Activated T-helper 2 cell treated with anti-CD3 and anti-CD28 coated beads, Interferon-gamma antibody, Interleukin-2, Interleukin-4, amounts not matched to agents 10 μg/mL and 5 μg/mL and 100 μg/mL, durations not matched to agents 14 hours and 24 hours and 36 hours (primary cell): ENCODE measurements at regions of chr12 and their contacts with region 1.

Region 1: GRCh38 chr12:24991209-24992049 is 42.5 kb upstream of the BCAT1 start:
- DNase-seq: no peak
- H3K4me3 Mint-ChIP-seq: no peak overlapping the region
- H3K27ac Mint-ChIP-seq: no peak overlapping the region
- H3K4me1 Mint-ChIP-seq: no peaks in the 10 kb centered on the region
- H3K27me3 Mint-ChIP-seq: peaks cover 19% of the 10 kb centered on the region

Region 2: DNA sequence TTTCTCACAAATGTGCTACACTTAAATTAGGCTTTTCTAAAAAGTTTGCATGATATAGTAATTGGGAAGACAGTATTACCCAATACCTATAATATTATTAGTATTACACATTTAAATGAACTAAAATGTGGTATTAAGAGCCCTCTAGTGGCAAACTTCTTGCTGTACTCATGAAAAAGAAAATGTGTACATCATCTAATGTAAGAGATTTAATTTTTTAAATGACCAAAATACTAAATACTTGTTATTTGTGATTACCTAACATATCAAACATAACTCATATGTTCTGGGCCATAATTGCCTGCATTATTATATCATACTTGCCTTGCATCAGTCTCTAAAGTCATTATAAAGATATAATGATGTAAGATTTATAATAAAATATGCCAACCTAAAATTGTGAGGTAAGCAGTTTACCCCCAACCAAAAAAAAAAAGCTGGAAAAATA is 139.3 kb after region 1 on chr12:
- intact Hi-C with region 1: loop called (anchors 1 kb)
- DNase-seq: no peak
- H3K4me3 Mint-ChIP-seq: no peak overlapping the region
- H3K27ac Mint-ChIP-seq: no peak overlapping the region
- H3K4me1 Mint-ChIP-seq: no peaks in the 10 kb centered on the region
- H3K27me3 Mint-ChIP-seq: peaks cover 11% of the 10 kb centered on the region

Region 3: GRCh38 chr12:25151476-25151875 is 160.0 kb after region 1 on chr12:
- intact Hi-C with region 1: loop called (anchors 1 kb)
- DNase-seq: no peak
- H3K4me3 Mint-ChIP-seq: no peak overlapping the region
- H3K27ac Mint-ChIP-seq: no peak overlapping the region
- H3K4me1 Mint-ChIP-seq: peaks cover 6% of the 10 kb centered on the region
- H3K27me3 Mint-ChIP-seq: peaks cover 6% of the 10 kb centered on the region